ENCODE measurements at regions of chr5 and their contacts with region 1.

Region 1: DNA sequence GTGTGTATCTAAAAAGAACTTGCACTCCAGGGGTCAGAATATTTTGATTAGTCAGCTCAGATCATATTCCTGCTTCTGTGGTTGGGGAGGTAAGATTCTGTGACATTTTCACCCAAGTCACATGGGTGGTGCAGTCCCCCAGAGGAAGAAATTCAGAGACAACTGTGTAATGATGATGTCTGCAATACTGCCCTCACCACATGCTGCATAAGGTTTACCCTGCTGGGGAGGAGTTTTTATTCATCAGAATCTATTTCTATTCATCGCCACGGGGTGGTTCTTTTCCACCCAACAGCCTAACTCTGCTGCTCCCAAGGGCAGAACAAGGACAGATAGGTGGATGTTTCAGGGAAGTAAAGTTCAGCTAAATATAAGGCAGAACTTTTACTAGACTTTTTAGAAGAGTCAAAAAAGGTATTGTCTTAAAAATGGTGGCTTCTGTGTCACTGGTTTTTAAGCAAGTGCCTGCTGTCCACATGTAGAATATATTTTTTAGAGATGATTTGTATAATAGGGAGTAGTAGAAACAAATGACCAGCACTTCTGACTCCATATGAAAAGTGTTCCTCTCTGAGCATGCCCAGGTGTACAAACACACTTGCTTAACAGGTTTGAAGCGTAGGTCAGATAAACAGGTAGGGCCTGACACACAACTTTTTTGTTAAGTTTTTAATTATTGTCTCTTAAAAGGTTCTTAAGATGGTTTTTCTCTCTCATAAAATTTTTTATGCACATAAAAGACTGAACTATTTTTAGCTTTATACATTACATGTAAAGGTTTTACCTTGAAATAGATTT is 352.7 kb downstream of the LRRC70 start:
- DNase-seq: no peak
- H3K4me3 ChIP-seq: no peak overlapping the region
- H3K27ac ChIP-seq: no peak overlapping the region
- H3K4me1 ChIP-seq: no peaks in the 10 kb centered on the region
- H3K27me3 ChIP-seq: no peaks in the 10 kb centered on the region
- CTCF ChIP-seq: no peak
- POLR2A ChIP-seq: no peak

Region 2: GRCh38 chr5:63963080-63963735 is 1031.9 kb after region 1 on chr5:
- intact Hi-C with region 1: loop called (anchors 5 kb)
- DNase-seq: no peak
- H3K4me3 ChIP-seq: no peak overlapping the region
- H3K27ac ChIP-seq: no peak overlapping the region
- H3K4me1 ChIP-seq: no peaks in the 10 kb centered on the region
- H3K27me3 ChIP-seq: peaks cover 0 to 46% of the 10 kb centered on the region in 2 donors
- CTCF ChIP-seq: peak in 2 of 3 donors; percentile 11 to 40
- POLR2A ChIP-seq: no peak

Measured in breast epithelium (tissue), 4 donors.